H1 (cell line): ENCODE measurements at regions of chr17 and their contacts with region 1.

Region 1: GRCh38 chr17:41329281-41329948 is 13.9 kb upstream of the KRTAP17-1 start:
- DNase-seq: peak; percentile 27 to 78
- H3K4me3 ChIP-seq: no peak overlapping the region
- H3K27ac ChIP-seq: no peak overlapping the region
- H3K4me1 ChIP-seq: no peaks in the 10 kb centered on the region; a peak in 1 of 7 replicates
- H3K27me3 ChIP-seq: no peaks in the 10 kb centered on the region
- CTCF ChIP-seq: peak; percentile 86 to 97 (median 95)
- EP300 ChIP-seq: no peak
- POLR2A ChIP-seq: no peak
- RAD21 ChIP-seq: peak; percentile 83 to 88

Region 2: GRCh38 chr17:41294016-41294415 is 35.4 kb before region 1 on chr17:
- CTCF ChIA-PET with region 1: no interaction called
- POLR2A ChIA-PET with region 1: no interaction called
- DNase-seq: no peak
- H3K4me3 ChIP-seq: no peak overlapping the region
- H3K27ac ChIP-seq: no peak overlapping the region
- H3K4me1 ChIP-seq: no peaks in the 10 kb centered on the region; a peak in 1 of 7 replicates
- H3K27me3 ChIP-seq: no peaks in the 10 kb centered on the region
- CTCF ChIP-seq: no peak
- EP300 ChIP-seq: no peak
- POLR2A ChIP-seq: no peak
- RAD21 ChIP-seq: no peak

Region 3: GRCh38 chr17:41347869-41348773 is 18.7 kb after region 1 on chr17:
- CTCF ChIA-PET with region 1: interaction called, 27 read pairs
- POLR2A ChIA-PET with region 1: no interaction called
- DNase-seq: no peak
- H3K4me3 ChIP-seq: no peak overlapping the region
- H3K27ac ChIP-seq: no peak overlapping the region
- H3K4me1 ChIP-seq: no peaks in the 10 kb centered on the region
- H3K27me3 ChIP-seq: no peaks in the 10 kb centered on the region
- CTCF ChIP-seq: no peak
- EP300 ChIP-seq: no peak
- POLR2A ChIP-seq: no peak
- RAD21 ChIP-seq: no peak

Region 4: GRCh38 chr17:42120770-42121769 is 791.7 kb after region 1 on chr17 and contains the start of gene KAT2A:
- CTCF ChIA-PET with region 1: no interaction called
- POLR2A ChIA-PET with region 1: no interaction called
- DNase-seq: peak; percentile 43 to 86
- H3K4me3 ChIP-seq: peak within 1 kb of the TSS; percentile 38 to 84 (median 60)
- H3K27ac ChIP-seq: no peak within 1 kb of the TSS; the same call in 1 of the 2 replicates
- H3K4me1 ChIP-seq: peaks cover 0 to 17% (median 13%) of the 10 kb centered on the region in 4 experiments; a peak in 6 of 7 replicates
- H3K27me3 ChIP-seq: no peaks in the 10 kb centered on the region; a peak in 2 of 7 replicates
- CTCF ChIP-seq: no peak
- EP300 ChIP-seq: no peak
- POLR2A ChIP-seq: peak in 1 of 2 experiments; percentile 81; a peak in 2 of 3 replicates
- RAD21 ChIP-seq: no peak
- total RNA-seq, gene KAT2A: 32.5 and 34.2 TPM in 2 replicates